Right cardiac atrium (tissue), 5 donors: ENCODE measurements at regions of chr6 and their contacts with region 1.

Region 1: GRCh38 chr6:105087571-105088211 is 92.1 kb downstream of the POPDC3 start:
- DNase-seq: no peak
- ATAC-seq: peak; percentile 39 to 40
- H3K4me3 ChIP-seq: no peak overlapping the region
- H3K27ac ChIP-seq: no peak overlapping the region
- H3K4me1 ChIP-seq: no peaks in the 10 kb centered on the region
- H3K27me3 ChIP-seq: no peaks in the 10 kb centered on the region

Region 2: DNA sequence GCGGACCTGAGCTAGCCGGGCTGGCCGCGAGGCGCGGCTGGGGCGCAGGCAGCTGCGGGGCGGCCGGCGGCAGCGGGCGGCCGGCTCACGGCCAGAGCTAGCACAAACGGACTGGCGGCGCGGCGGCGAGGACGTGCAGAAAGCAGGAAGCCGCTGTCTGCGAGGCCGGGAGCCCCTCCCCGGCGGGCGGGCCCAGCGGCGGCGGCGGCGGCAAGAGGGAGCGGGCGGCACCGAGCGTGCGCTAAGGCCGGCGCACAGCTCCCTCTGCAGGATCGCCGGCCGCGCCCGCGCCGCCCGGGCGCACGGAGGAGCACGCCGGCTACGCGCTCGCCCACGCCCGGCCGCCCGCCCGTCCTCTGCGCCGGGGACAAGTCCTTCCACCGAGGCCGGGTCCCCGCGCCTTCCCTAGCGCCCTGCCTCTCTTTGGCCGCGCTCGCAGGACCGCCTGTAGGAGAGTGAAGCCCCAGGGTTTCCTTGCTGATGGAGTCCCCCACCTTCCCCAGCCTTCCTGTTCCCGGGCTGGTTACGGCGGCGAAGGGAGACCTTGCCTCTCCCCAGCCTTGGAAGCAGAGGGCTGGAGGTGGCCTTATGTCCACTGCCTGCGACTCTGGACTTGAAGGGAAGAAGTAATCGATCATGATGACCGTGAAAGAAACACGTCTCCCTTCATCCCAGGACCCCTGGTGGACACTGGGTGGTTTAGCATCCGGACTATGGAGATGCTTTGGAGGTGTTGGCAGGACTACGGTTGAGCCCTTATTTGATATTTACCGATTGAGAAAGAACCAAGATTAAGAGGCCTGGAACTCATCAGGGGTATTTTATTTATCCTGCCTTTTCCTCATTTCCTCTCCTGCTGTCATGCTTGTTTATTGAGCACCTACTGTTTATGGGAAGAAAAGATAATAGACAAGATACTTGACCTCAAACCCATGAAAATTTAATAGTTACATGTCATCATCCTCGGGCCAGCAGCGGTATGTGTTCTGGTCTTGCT is 315.5 kb after region 1 on chr6 and contains the start of gene PREP:
- intact Hi-C with region 1: loop called in 1 of 4 experiments (anchors 5 kb)
- DNase-seq: peak; percentile 91 to 96 (median 95)
- ATAC-seq: peak; percentile 97 to 98
- H3K4me3 ChIP-seq: peak within 1 kb of the TSS; percentile 96
- H3K27ac ChIP-seq: peak within 1 kb of the TSS; percentile 92
- H3K4me1 ChIP-seq: peaks cover 11% of the 10 kb centered on the region
- H3K27me3 ChIP-seq: no peaks in the 10 kb centered on the region
- total RNA-seq, gene PREP: 23.8 to 26.8 (median 26.2) TPM

Region 3: DNA sequence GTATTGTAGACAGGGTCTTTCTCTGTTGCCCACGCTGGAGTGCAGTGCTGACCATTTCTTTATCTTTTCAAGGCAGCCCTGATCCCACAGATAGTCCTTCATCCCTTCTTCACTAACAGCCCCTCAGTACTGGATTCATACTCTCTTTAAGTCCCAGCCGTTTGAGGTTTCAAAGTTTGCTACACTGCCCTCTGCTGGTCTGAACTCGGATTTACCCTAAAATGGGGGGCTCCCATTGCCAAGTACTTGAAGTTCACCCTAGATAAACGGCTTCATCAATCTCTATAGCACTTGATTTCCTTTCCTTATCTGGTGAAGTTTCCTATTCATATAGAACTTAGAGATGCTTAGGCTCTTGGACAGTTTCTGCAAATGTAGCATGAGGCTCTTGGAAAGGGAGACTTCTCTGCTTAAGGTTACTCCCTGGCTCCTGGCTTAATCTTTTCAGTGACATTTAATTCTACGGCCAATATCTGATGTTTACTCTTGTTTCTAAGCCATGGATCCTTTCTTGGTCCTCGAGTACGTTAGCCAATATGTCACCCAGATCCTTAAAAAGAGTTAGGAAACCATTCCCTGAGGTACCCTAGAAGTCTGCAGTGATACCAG is 336.6 kb after region 1 on chr6:
- intact Hi-C with region 1: loop called in 1 of 4 experiments (anchors 5 kb)
- DNase-seq: no peak
- ATAC-seq: peak; percentile 40 to 70
- H3K4me3 ChIP-seq: no peak overlapping the region
- H3K27ac ChIP-seq: no peak overlapping the region
- H3K4me1 ChIP-seq: no peaks in the 10 kb centered on the region
- H3K27me3 ChIP-seq: no peaks in the 10 kb centered on the region